AG04450 (cell line): ENCODE measurements at regions of chr20 and their contacts with region 1.

Region 1: GRCh38 chr20:49484180-49485140 is 2.0 kb upstream of the KCNB1 start:
- DNase-seq: peak; percentile 32
- H3K4me3 ChIP-seq: peak overlapping the region; percentile 58
- H3K27ac ChIP-seq: no peak overlapping the region
- H3K27me3 ChIP-seq: peaks cover 53% of the 10 kb centered on the region
- CTCF ChIP-seq: peak; percentile 69

Region 2: DNA sequence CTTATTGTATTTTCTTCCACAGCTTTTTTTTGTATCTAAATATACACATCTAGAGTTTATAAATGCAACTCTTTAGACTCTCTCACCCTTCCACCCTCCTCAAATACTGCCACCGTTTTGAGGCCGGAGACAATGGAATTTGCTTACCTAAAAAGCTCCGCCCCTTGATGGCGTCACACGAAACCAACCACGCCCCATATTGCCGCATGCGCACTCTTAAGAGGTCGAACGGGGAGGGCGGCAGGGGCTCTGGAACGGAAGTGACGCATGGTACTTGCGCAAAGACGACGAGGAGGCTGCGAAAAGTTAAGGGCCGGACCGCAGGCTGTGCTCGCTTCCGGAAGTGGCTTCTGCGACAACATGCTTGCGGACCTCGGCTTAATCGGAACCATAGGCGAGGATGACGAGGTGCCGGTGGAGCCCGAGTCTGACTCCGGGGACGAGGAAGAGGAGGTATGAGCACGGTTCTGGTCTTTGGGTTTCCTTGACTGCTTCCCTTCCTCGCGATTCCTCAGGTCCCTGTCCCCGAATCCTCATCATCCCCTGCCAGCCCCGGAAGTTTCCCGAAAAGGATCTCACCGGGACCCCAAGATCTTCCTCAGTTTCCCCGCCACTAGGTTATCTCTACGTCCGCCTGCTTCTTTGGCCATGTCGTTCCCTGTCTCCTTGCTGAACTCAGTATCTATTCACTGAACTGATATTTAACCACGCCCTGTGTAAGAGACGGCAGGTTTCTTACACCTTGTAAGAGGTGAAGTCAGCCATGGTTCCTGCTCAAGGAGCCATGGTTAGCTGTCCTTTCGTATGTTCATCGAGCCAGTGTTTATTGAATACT is 265.2 kb before region 1 on chr20 and contains the start of gene DDX27:
- CTCF ChIA-PET with region 1: no interaction called
- POLR2A ChIA-PET with region 1: no interaction called
- DNase-seq: peak; percentile 98
- H3K4me3 ChIP-seq: peak within 1 kb of the TSS; percentile 98
- H3K27ac ChIP-seq: peak within 1 kb of the TSS; percentile 78
- H3K27me3 ChIP-seq: no peaks in the 10 kb centered on the region
- CTCF ChIP-seq: no peak
- polyA plus RNA-seq, gene DDX27: 31.3 and 32.0 TPM in 2 replicates

Region 3: GRCh38 chr20:49384437-49385088 is 99.9 kb before region 1 on chr20:
- CTCF ChIA-PET with region 1: interaction called, 10 read pairs
- POLR2A ChIA-PET with region 1: no interaction called
- DNase-seq: no peak
- H3K4me3 ChIP-seq: no peak overlapping the region
- H3K27ac ChIP-seq: no peak overlapping the region
- H3K27me3 ChIP-seq: peaks cover 33% of the 10 kb centered on the region
- CTCF ChIP-seq: peak; percentile 71

Region 4: GRCh38 chr20:49455691-49456090 is 28.8 kb before region 1 on chr20:
- CTCF ChIA-PET with region 1: no interaction called
- POLR2A ChIA-PET with region 1: no interaction called
- DNase-seq: no peak
- H3K4me3 ChIP-seq: no peak overlapping the region
- H3K27ac ChIP-seq: no peak overlapping the region
- H3K27me3 ChIP-seq: peaks cover 35% of the 10 kb centered on the region
- CTCF ChIP-seq: no peak

Region 5: DNA sequence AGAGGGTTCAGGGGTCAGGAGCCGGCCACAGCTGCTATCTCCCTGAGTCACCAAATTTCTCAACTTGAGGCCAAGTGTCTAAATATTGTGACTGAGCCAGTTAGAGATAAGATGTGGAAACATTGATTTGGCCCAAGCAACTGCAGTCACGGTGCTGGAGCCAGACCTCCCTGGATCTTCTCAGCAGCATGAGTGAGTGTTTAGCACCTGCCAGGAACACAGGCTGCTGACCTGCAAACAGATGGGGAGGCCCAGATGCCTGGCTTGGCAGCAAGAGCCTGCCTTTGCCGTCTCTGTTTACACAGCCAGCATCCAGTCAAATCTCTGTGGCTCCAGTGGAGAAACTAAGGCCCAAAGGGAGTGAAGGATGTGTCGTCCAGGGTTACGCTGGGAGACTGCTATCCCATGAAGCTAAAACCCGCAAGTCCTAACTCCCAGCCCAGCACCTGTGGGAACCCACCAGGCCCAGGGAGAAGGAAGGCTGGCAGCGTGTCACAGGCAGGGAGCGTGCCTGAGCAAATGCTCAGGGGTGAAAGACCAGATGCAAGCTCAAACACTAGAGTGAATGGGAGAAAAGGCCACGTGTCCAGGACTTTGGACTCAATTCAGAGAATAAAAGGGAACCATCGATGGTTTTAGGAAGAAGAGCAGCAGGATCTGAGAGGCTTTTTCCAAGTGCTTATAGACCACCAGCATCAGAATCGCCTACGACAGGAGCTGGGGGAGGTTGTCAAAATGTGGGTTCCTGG is 99.4 kb after region 1 on chr20:
- CTCF ChIA-PET with region 1: no interaction called
- POLR2A ChIA-PET with region 1: no interaction called
- DNase-seq: peak; percentile 88
- H3K4me3 ChIP-seq: no peak overlapping the region
- H3K27ac ChIP-seq: peak overlapping the region; percentile 65
- H3K27me3 ChIP-seq: no peaks in the 10 kb centered on the region
- CTCF ChIP-seq: peak; percentile 12; the same call in 1 of the 2 replicates